Activated B cell treated with CpG ODN at 0.5 μM for 24 hours (primary cell): ENCODE measurements at regions of chr19 and their contacts with region 1.

Region 1: DNA sequence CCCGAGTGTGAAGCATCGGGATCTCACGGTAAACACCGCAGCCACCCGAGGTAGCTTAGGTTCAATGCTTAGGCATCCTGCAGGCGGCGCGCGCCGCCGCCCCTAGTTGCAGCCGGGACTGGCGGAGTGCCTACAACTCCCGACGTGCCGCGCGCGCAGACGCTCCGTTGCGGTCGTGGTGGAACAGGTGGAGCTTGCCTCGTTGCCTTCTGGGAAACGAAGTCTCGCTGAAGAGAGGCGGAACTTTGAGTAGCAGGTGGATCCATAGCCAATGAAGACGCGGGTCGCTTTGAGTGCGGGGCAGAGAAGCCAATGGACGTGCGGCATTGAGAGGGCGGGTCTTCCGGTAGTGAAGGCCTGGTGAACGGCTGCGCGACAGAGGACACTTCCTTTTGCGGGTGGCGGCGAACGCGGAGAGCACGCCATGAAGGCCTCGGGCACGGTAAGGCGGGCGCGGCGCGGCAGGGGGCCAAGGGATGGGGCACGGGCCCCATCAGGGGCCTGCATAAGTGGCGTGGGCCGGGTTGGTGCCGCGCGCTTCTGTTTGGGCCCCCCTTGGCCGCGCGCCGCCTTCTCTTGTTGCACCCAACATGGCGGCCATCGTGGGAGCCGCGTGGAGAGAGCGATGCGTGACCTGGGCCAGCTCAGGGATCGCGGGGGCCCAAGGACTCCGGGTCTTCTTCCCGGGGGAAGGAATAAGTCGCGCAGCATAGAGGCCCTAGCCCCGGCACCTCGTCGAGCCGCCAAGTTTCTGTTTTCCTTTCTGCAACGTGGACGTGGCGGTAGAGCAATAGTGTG is at the start of gene RPL18A:
- DNase-seq: peak; percentile 85
- ATAC-seq: peak; percentile 91
- H3K4me3 Mint-ChIP-seq: peak within 1 kb of the TSS; percentile 99
- H3K27ac Mint-ChIP-seq: peak within 1 kb of the TSS; percentile 98
- H3K4me1 Mint-ChIP-seq: peaks cover 47% of the 10 kb centered on the region
- H3K27me3 Mint-ChIP-seq: no peaks in the 10 kb centered on the region
- CTCF ChIP-seq: no peak
- total RNA-seq, gene RPL18A: 4,113 and 4,404 TPM in 2 replicates

Region 2: GRCh38 chr19:17539238-17540117 is 320.3 kb before region 1 on chr19:
- CTCF ChIA-PET with region 1: no interaction called
- POLR2A ChIA-PET with region 1: interaction called, 11 read pairs
- intact Hi-C with region 1: no loop called
- DNase-seq: peak; percentile 96
- ATAC-seq: peak; percentile 86
- H3K4me3 Mint-ChIP-seq: peak overlapping the region; percentile 84
- H3K27ac Mint-ChIP-seq: peak overlapping the region; percentile 90
- H3K4me1 Mint-ChIP-seq: peaks cover 56% of the 10 kb centered on the region
- H3K27me3 Mint-ChIP-seq: no peaks in the 10 kb centered on the region
- CTCF ChIP-seq: no peak

Region 3: DNA sequence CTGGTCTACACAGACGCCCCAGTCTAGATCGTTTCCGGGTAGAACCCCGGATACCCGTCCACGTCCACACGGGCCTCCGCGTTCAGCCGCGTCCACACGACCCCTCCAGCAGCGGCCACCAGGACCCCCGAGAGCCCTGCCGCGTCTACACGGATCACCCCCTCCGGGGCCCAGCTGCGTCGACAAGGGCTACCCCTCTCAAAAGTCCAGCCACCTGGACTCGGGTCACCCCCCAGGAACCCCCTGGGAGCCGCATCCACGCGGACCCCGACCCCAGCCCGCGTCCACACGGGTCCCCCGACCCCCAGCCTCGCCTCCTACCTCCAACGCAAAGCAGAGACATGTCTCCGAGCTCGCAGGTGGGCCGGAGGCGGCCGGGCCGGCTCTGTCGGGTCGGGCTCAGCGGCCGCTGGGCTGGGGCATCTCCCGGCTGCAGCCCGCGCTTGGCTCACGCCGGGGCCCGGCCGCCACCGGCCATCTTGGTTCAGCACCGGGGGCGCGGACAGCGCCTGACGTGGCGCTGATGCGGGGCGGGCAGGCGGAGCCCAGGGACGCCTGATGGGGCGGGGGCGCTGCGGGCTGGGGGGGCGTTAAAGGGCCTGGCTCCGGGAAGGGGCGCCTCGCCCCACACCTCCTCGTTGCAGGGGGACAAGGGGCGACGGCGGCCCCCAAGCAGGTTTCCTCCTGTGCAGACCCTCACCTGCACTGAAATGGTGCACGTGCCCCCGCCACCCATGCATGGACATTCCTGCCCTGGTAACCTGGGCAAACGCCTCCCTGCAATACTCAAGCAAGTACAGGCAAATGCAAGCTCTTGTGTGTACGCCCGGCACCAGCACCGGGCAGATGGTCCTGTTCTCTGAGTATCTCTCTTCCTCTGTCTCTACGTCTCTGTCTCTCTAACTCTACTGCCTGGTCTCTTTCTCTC is 171.6 kb before region 1 on chr19 and contains the start of gene UNC13A:
- CTCF ChIA-PET with region 1: no interaction called
- POLR2A ChIA-PET with region 1: interaction called, 3 read pairs
- intact Hi-C with region 1: loop called (anchors 5 kb)
- DNase-seq: peak; percentile 48
- ATAC-seq: peak; percentile 90
- H3K4me3 Mint-ChIP-seq: peak within 1 kb of the TSS; percentile 11
- H3K27ac Mint-ChIP-seq: no peak within 1 kb of the TSS
- H3K4me1 Mint-ChIP-seq: peaks cover 18% of the 10 kb centered on the region
- H3K27me3 Mint-ChIP-seq: peaks cover 62% of the 10 kb centered on the region
- CTCF ChIP-seq: no peak
- total RNA-seq, gene UNC13A: 0.02 and 0.04 TPM in 2 replicates

Region 4: GRCh38 chr19:17766543-17767131 is 93.1 kb before region 1 on chr19:
- CTCF ChIA-PET with region 1: interaction called, 10 read pairs
- POLR2A ChIA-PET with region 1: interaction called, 4 read pairs
- intact Hi-C with region 1: no loop called
- DNase-seq: peak; percentile 57
- ATAC-seq: peak; percentile 77
- H3K4me3 Mint-ChIP-seq: no peak overlapping the region
- H3K27ac Mint-ChIP-seq: no peak overlapping the region
- H3K4me1 Mint-ChIP-seq: peaks cover 23% of the 10 kb centered on the region
- H3K27me3 Mint-ChIP-seq: no peaks in the 10 kb centered on the region
- CTCF ChIP-seq: no peak

Region 5: DNA sequence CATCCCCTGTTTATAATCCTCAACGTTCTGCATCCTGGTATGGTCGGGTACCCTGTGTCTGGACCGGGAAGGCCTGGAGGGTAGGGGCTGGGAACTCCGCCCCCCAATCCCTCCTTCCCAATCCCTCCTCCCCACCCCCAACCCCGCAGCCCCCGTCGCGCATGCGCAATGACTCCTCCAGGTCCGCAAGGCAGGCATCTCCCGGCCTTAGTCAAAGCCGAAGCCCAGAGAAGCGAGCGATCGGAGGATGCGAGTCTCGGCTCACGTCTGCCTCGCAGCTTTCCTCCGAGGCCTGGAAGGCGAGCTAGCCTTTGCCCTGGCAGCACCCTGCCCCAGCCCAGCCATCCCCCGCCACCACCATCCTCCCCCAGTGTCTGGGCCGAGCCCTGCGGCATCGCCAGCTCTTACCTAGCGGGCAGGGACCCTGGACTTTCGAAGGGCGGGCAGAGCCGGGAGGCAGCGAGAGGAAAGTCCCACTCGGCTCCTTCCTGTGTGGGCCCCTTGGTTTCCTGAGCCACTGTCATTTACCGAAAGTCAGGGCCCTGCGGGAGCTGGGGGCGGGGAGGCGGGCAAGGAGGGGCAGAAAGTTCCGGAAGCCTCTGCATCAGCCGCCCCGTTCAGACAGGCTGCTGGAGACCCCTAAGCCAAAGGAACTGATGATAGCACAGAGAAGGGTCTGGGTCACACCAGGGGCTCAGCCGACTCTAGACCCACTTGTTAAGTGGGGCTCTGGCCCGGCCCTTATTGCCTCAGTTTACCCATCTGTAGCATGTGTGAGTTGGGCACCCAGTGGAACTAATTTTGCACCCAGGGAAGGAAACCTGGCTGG is 12.0 kb before region 1 on chr19 and contains the start of gene JAK3:
- CTCF ChIA-PET with region 1: interaction called, 15 read pairs
- POLR2A ChIA-PET with region 1: interaction called, 121 read pairs
- intact Hi-C with region 1: no loop called
- DNase-seq: peak; percentile 79
- ATAC-seq: peak; percentile 86
- H3K4me3 Mint-ChIP-seq: peak within 1 kb of the TSS; percentile 94
- H3K27ac Mint-ChIP-seq: peak within 1 kb of the TSS; percentile 96
- H3K4me1 Mint-ChIP-seq: peaks cover 73% of the 10 kb centered on the region
- H3K27me3 Mint-ChIP-seq: no peaks in the 10 kb centered on the region
- CTCF ChIP-seq: no peak
- total RNA-seq, gene JAK3: 213 and 256 TPM in 2 replicates

Region 6: DNA sequence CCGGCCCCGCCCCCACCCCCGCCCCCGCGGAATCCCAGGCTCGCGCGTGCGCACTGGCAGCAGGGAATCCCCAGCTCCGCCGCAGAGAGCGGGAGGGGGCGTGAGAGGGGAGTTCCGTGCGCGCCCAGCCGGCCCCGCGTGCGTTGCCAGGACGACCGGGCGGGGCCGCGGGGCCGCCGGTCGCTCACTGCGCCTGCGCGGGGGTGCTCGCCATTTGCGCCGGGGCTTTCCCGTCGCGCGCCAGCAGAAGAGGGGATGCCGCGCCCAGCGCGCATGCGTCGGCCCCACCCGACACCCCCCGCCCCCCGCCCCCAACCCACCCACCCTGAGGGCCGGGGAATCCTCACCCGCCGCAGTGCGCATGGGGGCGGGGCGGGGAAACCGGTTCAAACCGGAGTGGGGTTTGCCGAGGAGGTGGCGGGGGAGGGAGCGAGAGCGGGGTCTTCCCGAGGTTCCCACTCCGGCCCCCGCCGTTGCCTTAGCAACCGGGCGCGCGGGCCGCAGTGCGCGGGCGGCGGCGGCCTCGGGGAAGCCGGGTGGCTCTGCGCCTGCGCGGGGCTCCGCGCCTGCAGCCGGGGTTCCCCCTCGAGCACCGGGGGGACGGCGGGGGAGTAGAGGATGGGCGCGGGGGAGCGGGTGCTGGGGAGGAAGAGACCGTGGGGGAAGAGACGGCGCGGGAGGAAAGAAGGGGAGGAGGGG is 88.2 kb after region 1 on chr19:
- CTCF ChIA-PET with region 1: no interaction called
- POLR2A ChIA-PET with region 1: interaction called, 18 read pairs
- intact Hi-C with region 1: no loop called
- DNase-seq: peak; percentile 98
- ATAC-seq: peak; percentile 63
- H3K4me3 Mint-ChIP-seq: peak overlapping the region; percentile 74
- H3K27ac Mint-ChIP-seq: no peak overlapping the region
- H3K4me1 Mint-ChIP-seq: peaks cover 59% of the 10 kb centered on the region
- H3K27me3 Mint-ChIP-seq: peaks cover 12% of the 10 kb centered on the region
- CTCF ChIP-seq: no peak